ENCODE measurements at regions of chr6 and their contacts with region 1.

Region 1: GRCh38 chr6:134406311-134406710 is 88.4 kb upstream of the SGK1 start:
- DNase-seq: no peak
- ATAC-seq: no peak
- H3K4me3 Mint-ChIP-seq: no peak overlapping the region
- H3K27ac Mint-ChIP-seq: no peak overlapping the region
- H3K4me1 Mint-ChIP-seq: peaks cover 11% of the 10 kb centered on the region
- H3K27me3 Mint-ChIP-seq: no peaks in the 10 kb centered on the region

Region 2: GRCh38 chr6:134267917-134268361 is 138.4 kb before region 1 on chr6:
- CTCF ChIA-PET with region 1: no interaction called
- POLR2A ChIA-PET with region 1: interaction called, 10 read pairs
- intact Hi-C with region 1: no loop called
- DNase-seq: no peak
- ATAC-seq: no peak
- H3K4me3 Mint-ChIP-seq: no peak overlapping the region
- H3K27ac Mint-ChIP-seq: no peak overlapping the region
- H3K4me1 Mint-ChIP-seq: peaks cover 13% of the 10 kb centered on the region
- H3K27me3 Mint-ChIP-seq: no peaks in the 10 kb centered on the region